Dorsolateral prefrontal cortex (tissue), 120 donors: ENCODE measurements at regions of chr19 and their contacts with region 1.

Region 1: GRCh38 chr19:1406774-1407499 is 449 bp upstream of the DAZAP1 start:
- DNase-seq: peak; percentile 96 to 99 (median 98)
- H3K4me3 ChIP-seq: peak overlapping the region; percentile 42 to 99 (median 66)
- H3K27ac ChIP-seq: peak overlapping the region; percentile 51 to 96 (median 87)
- H3K27me3 ChIP-seq: no peaks in the 10 kb centered on the region
- CTCF ChIP-seq: peak in 53 of 56 donors; percentile 20 to 69 (median 50)

Region 2: GRCh38 chr19:1383311-1384084 is 23.4 kb before region 1 on chr19 and contains the start of gene NDUFS7:
- intact Hi-C with region 1: loop called in 1 of 2 experiments (anchors 1 kb)
- DNase-seq: peak; percentile 88 to 94 (median 92)
- H3K4me3 ChIP-seq: peak within 1 kb of the TSS; percentile 60 to 100 (median 95)
- H3K27ac ChIP-seq: peak within 1 kb of the TSS; percentile 88 to 100 (median 96)
- H3K27me3 ChIP-seq: no peaks in the 10 kb centered on the region
- CTCF ChIP-seq: peak in 28 of 56 donors; percentile 1 to 46 (median 22)
- total RNA-seq, gene NDUFS7: 105 to 222 (median 151) TPM

Region 3: GRCh38 chr19:1438035-1438932 is 31.3 kb after region 1 on chr19 and contains the start of gene RPS15:
- intact Hi-C with region 1: loop called (anchors 2 kb)
- DNase-seq: peak; percentile 87 to 95 (median 92)
- H3K4me3 ChIP-seq: peak within 1 kb of the TSS; percentile 49 to 100 (median 88)
- H3K27ac ChIP-seq: peak within 1 kb of the TSS; percentile 53 to 96 (median 87)
- H3K27me3 ChIP-seq: no peaks in the 10 kb centered on the region
- CTCF ChIP-seq: peak; percentile 94 to 100 (median 99)
- total RNA-seq, gene RPS15: 343 to 670 (median 497) TPM

Region 4: GRCh38 chr19:1503089-1503933 is 96.4 kb after region 1 on chr19:
- intact Hi-C with region 1: no loop called
- DNase-seq: peak in 8 of 10 donors; percentile 41 to 72 (median 56)
- H3K4me3 ChIP-seq: peak overlapping the region in 28 of 59 donors; percentile 1 to 43 (median 22)
- H3K27ac ChIP-seq: no peak overlapping the region
- H3K27me3 ChIP-seq: peaks cover 0 to 19% (median 0%) of the 10 kb centered on the region in 45 donors
- CTCF ChIP-seq: peak; percentile 26 to 89 (median 78)

Region 5: DNA sequence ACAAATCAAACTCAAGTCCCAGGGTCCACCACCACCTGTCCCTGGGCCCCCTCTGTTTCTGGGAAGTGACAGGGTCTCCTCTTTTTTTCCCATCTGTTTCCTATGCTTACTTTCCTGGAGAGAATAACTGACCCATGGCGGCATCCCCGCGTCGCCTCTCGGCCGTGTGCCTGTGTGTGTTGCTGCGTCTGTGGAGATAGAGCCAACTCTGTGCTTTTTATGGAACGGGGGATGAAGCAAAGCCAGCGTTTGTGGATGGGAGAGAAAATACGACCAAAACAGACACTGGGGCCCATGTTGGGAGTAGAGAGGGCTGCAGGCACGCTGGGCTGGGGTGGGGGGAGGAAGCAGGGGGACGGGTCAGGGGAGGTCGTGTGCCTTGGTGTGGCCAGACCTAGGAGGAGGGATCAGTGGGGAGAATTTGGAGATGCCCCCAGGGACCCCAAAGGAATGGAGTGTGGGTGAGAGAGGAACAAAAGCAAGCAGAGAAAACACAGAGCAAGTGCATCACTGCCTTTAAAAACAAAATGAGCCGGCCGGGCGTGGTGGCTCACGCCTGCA is 133.5 kb after region 1 on chr19:
- intact Hi-C with region 1: no loop called
- DNase-seq: peak in 2 of 10 donors; percentile 14 to 63
- H3K4me3 ChIP-seq: no peak overlapping the region
- H3K27ac ChIP-seq: peak overlapping the region in 15 of 59 donors; percentile 10 to 63 (median 32)
- H3K27me3 ChIP-seq: peaks cover 0 to 6% (median 0%) of the 10 kb centered on the region in 45 donors
- CTCF ChIP-seq: no peak